ENCODE measurements at regions of chr6 and their contacts with region 1.

Region 1: GRCh38 chr6:28880894-28881780 is 42.6 kb downstream of the TRIM27 start:
- DNase-seq: peak in 9 of 10 donors; percentile 39 to 77 (median 67)
- ATAC-seq: no peak
- H3K4me3 Mint-ChIP-seq: peak overlapping the region; percentile 80 to 93 (median 87)
- H3K27ac Mint-ChIP-seq: peak overlapping the region; percentile 67 to 98 (median 88)
- H3K4me1 Mint-ChIP-seq: peaks cover 16 to 54% (median 42%) of the 10 kb centered on the region in 4 donors
- H3K27me3 Mint-ChIP-seq: peaks cover 0 to 10% (median 0%) of the 10 kb centered on the region in 5 donors

Region 2: GRCh38 chr6:28940858-28941680 is 59.9 kb after region 1 on chr6:
- POLR2A ChIA-PET with region 1: interaction called, 11 read pairs
- DNase-seq: peak; percentile 41 to 89 (median 84)
- ATAC-seq: peak; percentile 65 to 70
- H3K4me3 Mint-ChIP-seq: peak overlapping the region; percentile 84 to 98 (median 94)
- H3K27ac Mint-ChIP-seq: peak overlapping the region; percentile 92 to 99 (median 94)
- H3K4me1 Mint-ChIP-seq: peaks cover 27 to 61% (median 56%) of the 10 kb centered on the region in 4 donors
- H3K27me3 Mint-ChIP-seq: peaks cover 0 to 11% (median 0%) of the 10 kb centered on the region in 5 donors

Region 3: DNA sequence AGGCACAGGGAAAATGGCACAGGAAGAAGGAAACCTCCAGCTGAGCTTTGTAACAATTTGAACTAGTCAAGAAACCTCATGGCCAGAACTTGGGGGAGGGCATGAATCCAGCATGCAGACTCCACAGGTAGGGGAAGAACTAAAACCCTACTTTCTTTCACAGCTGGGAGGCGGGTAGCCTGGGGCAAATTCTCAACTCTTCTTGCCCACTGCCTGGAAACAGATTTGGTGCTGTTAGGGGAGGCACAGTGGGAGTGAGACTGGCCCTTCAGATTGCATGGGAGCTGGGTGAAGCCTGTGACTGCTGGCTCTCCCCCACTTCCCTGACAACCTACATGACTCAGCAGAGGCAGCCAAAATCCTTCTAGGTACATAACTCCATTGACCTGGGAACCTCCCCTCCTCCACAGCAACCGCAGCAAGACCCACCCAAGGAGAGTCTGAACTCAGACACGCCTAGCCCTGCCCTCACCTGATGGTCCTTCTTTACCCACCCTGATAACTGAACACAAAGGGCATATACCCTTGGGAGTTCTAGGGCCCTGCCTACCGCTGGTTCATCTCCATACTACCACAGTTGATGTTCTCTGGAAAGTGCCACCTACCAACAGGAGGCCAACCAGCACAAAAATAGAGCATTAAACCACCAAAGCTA is 79.8 kb after region 1 on chr6:
- POLR2A ChIA-PET with region 1: no interaction called
- DNase-seq: no peak
- ATAC-seq: no peak
- H3K4me3 Mint-ChIP-seq: no peak overlapping the region
- H3K27ac Mint-ChIP-seq: peak overlapping the region in 1 of 10 donors; percentile 16
- H3K4me1 Mint-ChIP-seq: no peaks in the 10 kb centered on the region
- H3K27me3 Mint-ChIP-seq: peaks cover 6 to 45% (median 38%) of the 10 kb centered on the region in 5 donors

Region 4: GRCh38 chr6:28985462-28986164 is 104.5 kb after region 1 on chr6:
- POLR2A ChIA-PET with region 1: no interaction called
- DNase-seq: no peak
- ATAC-seq: no peak
- H3K4me3 Mint-ChIP-seq: peak overlapping the region; percentile 58 to 79 (median 73)
- H3K27ac Mint-ChIP-seq: peak overlapping the region in 4 of 10 donors; percentile 9 to 46 (median 34)
- H3K4me1 Mint-ChIP-seq: peaks cover 26 to 64% (median 55%) of the 10 kb centered on the region in 4 donors
- H3K27me3 Mint-ChIP-seq: peaks cover 2 to 31% (median 12%) of the 10 kb centered on the region in 5 donors

Measured in naive thymus-derived CD8-positive, alpha-beta T cell (primary cell).